PC-3 (cell line): ENCODE measurements at regions of chrX and their contacts with region 1.

Region 1: DNA sequence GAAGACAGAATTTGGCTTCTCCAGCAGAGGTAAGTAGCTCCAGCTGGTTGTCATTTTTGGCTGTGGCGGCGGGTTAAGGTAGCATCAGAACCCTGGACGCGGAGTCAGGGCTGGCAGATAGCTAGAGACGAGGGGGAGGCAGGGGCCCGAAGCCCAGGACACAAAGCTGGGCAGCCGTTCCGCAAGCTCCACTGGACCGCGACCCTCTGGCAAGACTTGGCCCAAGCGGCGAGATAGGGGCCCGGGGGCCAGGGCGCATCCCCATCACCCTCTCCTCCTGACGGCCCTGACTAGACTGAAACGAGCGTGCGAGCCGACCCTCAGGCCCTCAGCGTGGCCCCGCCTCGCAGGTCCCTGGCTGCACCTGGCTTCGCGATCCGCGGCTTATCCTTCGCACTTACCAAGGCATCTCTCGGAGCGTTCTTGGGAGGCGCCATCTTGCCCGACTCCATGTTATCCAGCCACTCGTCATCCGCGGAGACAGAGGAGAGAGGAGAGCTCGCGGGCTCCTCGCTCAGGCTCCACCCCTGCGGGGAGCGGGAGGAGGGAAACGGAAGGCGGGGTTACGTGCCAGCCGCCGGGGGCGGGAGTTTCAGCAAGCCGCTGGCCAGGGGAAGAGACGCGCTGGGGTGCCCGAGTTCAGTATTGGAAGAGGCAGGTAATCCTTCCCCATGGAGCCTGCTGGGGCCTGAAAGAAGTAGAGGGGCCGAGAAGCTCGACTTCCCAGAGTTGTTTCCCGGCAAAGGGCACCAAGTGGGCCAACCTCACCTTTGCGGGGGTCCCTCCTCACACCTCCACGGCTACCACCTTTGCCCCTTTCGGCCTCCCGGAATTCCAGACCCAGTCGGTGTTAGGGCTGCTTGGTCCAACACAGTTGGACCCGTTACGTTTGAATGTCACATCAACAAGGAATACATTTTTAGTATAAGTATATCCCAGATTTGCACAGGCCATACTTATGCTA is at the start of gene TAF9B:
- DNase-seq: peak; percentile 91
- ATAC-seq: peak; percentile 94
- H3K4me3 ChIP-seq: peak within 1 kb of the TSS; percentile 98
- H3K27ac ChIP-seq: peak within 1 kb of the TSS; percentile 5; the same call in 1 of the 2 replicates
- H3K4me1 ChIP-seq: peaks cover 10% of the 10 kb centered on the region
- H3K27me3 ChIP-seq: no peaks in the 10 kb centered on the region
- CTCF ChIP-seq: no peak
- total RNA-seq, gene TAF9B: 19.5 and 26.1 TPM in 2 replicates

Region 2: DNA sequence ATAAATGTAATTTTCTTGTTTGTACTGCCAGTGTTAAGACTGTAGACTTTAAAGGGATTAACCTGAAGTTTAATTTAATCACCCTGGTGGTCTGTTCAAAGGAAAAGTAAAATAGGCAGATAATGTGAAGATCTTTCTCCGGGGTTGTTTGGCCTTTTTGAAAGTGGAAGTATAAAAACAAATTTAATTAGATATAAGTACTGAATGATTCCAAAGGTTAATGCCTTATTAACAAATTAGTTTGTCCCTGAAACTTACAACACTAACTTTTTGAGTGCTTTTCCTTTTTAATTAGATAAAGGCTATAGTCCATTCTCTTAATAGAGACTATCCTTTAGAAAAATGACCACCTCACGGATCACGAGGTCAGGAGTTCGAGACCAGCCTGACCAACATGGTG is 159.6 kb before region 1 on chrX:
- CTCF ChIA-PET with region 1: no interaction called
- POLR2A ChIA-PET with region 1: no interaction called
- intact Hi-C with region 1: no loop called
- DNase-seq: no peak
- ATAC-seq: no peak
- H3K4me3 ChIP-seq: no peak overlapping the region
- H3K27ac ChIP-seq: no peak overlapping the region
- H3K4me1 ChIP-seq: peaks cover 12% of the 10 kb centered on the region; the same call in 1 of the 2 replicates
- H3K27me3 ChIP-seq: no peaks in the 10 kb centered on the region
- CTCF ChIP-seq: no peak

Region 3: GRCh38 chrX:78366576-78366975 is 227.1 kb after region 1 on chrX:
- CTCF ChIA-PET with region 1: no interaction called
- POLR2A ChIA-PET with region 1: interaction called, 5 read pairs
- intact Hi-C with region 1: loop called (anchors 5 kb)
- DNase-seq: peak; percentile 71
- ATAC-seq: peak; percentile 92
- H3K4me3 ChIP-seq: no peak overlapping the region
- H3K27ac ChIP-seq: peak overlapping the region; percentile 82
- H3K4me1 ChIP-seq: peaks cover 26% of the 10 kb centered on the region
- H3K27me3 ChIP-seq: no peaks in the 10 kb centered on the region
- CTCF ChIP-seq: no peak